T-cell (primary cell): ENCODE measurements at regions of chr19 and their contacts with region 1.

Region 1: DNA sequence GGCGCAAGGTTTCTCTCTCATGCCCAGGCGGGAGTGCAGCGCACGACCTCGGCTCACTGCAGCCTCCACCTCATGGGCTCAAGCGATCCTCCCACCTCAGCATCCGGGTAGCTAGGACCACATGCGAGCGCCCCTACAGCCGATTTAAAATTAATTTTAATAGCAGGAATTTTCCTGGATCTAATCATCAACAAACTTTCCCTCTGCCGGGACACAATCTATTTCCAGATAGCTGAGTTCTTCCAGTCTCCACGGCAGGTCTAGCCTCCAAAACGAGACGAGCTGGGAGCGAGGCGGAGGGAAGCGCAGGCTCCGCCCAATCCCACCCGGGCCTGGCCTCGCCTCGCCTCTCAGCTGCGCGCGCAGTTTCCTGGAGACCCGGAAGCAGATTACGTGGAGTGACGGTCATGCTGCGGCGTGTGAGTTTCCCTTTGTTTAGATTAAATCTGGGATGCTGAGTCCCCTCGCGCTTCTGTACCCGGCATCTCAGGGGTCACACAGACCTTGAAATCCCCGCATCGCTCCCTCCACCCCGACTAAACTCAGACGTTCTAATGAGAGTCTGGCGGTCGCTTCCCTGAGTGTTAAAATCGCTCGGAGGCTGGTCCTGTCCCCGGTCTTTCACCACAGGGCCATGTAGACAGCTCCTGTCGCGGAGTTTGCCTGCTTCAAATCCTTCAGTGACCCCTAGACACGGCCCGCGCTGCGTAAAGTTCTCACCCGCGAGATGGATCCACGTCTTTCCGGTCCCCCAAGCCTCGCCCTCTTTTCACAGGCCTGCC is at the start of gene ZNF880:
- DNase-seq: peak; percentile 75 to 94 (median 89)
- ATAC-seq: peak; percentile 97 to 100 (median 98)
- H3K4me3 ChIP-seq: peak within 1 kb of the TSS; percentile 83 to 96
- H3K4me3 Mint-ChIP-seq: peak within 1 kb of the TSS; percentile 91 to 93 (median 93)
- H3K27ac ChIP-seq: peak within 1 kb of the TSS; percentile 100
- H3K27ac Mint-ChIP-seq: peak within 1 kb of the TSS; percentile 94 to 95
- H3K4me1 ChIP-seq: peaks cover 2 to 17% of the 10 kb centered on the region in 2 experiments
- H3K4me1 Mint-ChIP-seq: peaks cover 13 to 17% (median 14%) of the 10 kb centered on the region in 3 donors
- H3K27me3 ChIP-seq: no peaks in the 10 kb centered on the region
- H3K27me3 Mint-ChIP-seq: no peaks in the 10 kb centered on the region
- total RNA-seq, gene ZNF880: 15.3 to 31.1 (median 28.5) TPM

Region 2: GRCh38 chr19:52095172-52096014 is 274.4 kb before region 1 on chr19 and contains the start of gene ZNF841:
- CTCF ChIA-PET with region 1: no interaction called
- POLR2A ChIA-PET with region 1: interaction called in 1 of 2 experiments, 11 read pairs
- DNase-seq: peak; percentile 67 to 87 (median 78)
- ATAC-seq: peak; percentile 94 to 98 (median 96)
- H3K4me3 ChIP-seq: peak within 1 kb of the TSS; percentile 94 to 98
- H3K4me3 Mint-ChIP-seq: peak within 1 kb of the TSS; percentile 94 to 100 (median 97)
- H3K27ac ChIP-seq: peak within 1 kb of the TSS; percentile 78
- H3K27ac Mint-ChIP-seq: peak within 1 kb of the TSS; percentile 92 to 94
- H3K4me1 ChIP-seq: peaks cover 2 to 20% of the 10 kb centered on the region in 2 experiments
- H3K4me1 Mint-ChIP-seq: peaks cover 24 to 47% (median 40%) of the 10 kb centered on the region in 3 donors
- H3K27me3 ChIP-seq: no peaks in the 10 kb centered on the region
- H3K27me3 Mint-ChIP-seq: peaks cover 0 to 3% of the 10 kb centered on the region in 2 donors
- total RNA-seq, gene ZNF841: 25.4 to 34.3 (median 32.2) TPM

Region 3: DNA sequence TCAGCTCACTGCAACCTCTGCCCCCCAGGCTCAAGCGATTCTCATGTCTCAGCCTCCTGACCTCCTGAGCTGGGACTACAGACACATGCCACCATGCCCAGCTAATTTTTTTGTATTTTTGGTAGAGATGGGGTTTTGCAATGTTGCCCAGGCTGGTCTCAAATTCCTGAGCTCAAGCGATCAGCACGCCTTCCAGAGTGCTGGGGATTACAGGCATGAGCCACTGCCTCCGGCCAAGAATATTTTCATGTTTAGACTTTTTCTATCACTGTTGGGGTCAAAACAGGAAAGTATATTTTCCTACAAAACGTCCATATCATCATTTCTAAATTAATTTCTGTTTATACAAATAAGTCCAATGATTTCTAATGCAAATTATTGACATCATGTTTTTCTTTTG is 109.8 kb before region 1 on chr19:
- CTCF ChIA-PET with region 1: no interaction called
- POLR2A ChIA-PET with region 1: interaction called in 1 of 2 experiments, 14 read pairs
- DNase-seq: no peak
- ATAC-seq: no peak
- H3K4me3 ChIP-seq: no peak overlapping the region
- H3K4me3 Mint-ChIP-seq: no peak overlapping the region
- H3K27ac ChIP-seq: no peak overlapping the region
- H3K27ac Mint-ChIP-seq: no peak overlapping the region
- H3K4me1 ChIP-seq: no peaks in the 10 kb centered on the region
- H3K4me1 Mint-ChIP-seq: no peaks in the 10 kb centered on the region
- H3K27me3 ChIP-seq: peaks cover 0 to 2% of the 10 kb centered on the region in 2 experiments
- H3K27me3 Mint-ChIP-seq: peaks cover 7 to 10% of the 10 kb centered on the region in 2 donors

Region 4: GRCh38 chr19:52391135-52391534 is 21.4 kb after region 1 on chr19:
- CTCF ChIA-PET with region 1: no interaction called
- POLR2A ChIA-PET with region 1: no interaction called
- DNase-seq: no peak
- ATAC-seq: no peak
- H3K4me3 ChIP-seq: no peak overlapping the region
- H3K4me3 Mint-ChIP-seq: no peak overlapping the region
- H3K27ac ChIP-seq: no peak overlapping the region
- H3K27ac Mint-ChIP-seq: no peak overlapping the region
- H3K4me1 ChIP-seq: no peaks in the 10 kb centered on the region
- H3K4me1 Mint-ChIP-seq: no peaks in the 10 kb centered on the region
- H3K27me3 ChIP-seq: no peaks in the 10 kb centered on the region
- H3K27me3 Mint-ChIP-seq: no peaks in the 10 kb centered on the region

Region 5: DNA sequence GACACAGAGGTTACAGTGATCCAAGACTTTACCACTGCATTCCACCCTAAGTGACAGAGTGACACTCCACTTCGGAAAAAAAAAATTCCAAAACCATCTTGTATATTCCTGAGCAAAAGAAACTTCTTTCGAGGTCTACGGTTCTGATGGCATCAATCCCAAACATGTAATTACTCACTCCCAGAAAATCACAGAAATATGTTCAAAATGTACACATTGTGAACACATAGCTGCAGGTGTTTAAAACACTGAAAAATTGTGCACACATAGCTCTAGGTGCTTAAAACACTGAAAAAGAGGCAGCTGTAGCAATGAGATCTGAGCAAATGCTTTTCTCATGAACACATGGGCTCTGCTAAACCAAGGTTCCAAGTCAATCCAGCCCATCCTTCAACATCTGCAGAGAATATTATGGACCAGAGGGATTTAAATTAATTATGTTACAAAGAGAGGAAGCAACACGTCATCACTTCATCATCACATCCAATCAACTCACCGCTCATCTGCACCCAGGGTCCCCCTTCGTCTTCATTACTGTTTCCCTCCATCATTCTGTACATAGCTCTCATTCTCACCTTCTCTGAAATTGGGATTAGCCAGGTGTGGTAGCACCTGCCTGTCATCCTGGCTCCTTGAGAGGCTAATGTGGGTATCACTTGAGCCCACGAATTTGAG is 501.8 kb after region 1 on chr19:
- CTCF ChIA-PET with region 1: no interaction called
- POLR2A ChIA-PET with region 1: no interaction called
- DNase-seq: no peak
- ATAC-seq: no peak
- H3K4me3 ChIP-seq: no peak overlapping the region
- H3K4me3 Mint-ChIP-seq: no peak overlapping the region
- H3K27ac ChIP-seq: no peak overlapping the region
- H3K27ac Mint-ChIP-seq: no peak overlapping the region
- H3K4me1 ChIP-seq: no peaks in the 10 kb centered on the region
- H3K4me1 Mint-ChIP-seq: no peaks in the 10 kb centered on the region
- H3K27me3 ChIP-seq: no peaks in the 10 kb centered on the region
- H3K27me3 Mint-ChIP-seq: no peaks in the 10 kb centered on the region

Region 6: DNA sequence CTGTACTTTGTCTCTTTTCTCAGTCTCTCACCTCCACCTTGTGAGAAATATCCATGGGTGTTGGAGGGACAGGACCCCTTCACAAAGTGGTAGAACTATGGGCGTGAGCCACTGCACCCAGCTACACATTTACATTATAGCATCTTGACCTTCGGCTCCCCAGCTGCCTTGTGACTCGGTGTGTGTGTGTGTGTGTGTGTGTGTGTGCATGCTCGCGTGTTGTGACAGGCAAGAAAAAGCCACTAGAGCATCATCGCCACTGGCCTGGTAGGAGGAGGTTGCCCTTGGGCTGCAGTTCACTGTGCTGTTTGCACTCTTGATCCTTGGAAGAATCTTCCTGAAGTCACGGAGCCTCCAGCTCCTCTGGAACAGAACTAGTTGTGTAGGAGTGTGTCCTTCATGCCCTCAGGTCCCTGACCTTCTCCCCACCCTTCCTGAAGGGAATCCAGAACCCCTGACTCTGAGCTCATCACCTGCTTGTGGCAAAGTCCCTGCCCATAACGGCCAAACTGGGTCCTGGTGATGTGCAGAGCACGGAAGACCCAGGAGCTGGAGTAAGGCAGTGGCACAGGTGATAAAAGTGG is 567.3 kb after region 1 on chr19:
- CTCF ChIA-PET with region 1: no interaction called
- POLR2A ChIA-PET with region 1: interaction called in 1 of 2 experiments, 13 read pairs
- DNase-seq: no peak
- ATAC-seq: no peak
- H3K4me3 ChIP-seq: no peak overlapping the region
- H3K4me3 Mint-ChIP-seq: no peak overlapping the region
- H3K27ac ChIP-seq: no peak overlapping the region
- H3K27ac Mint-ChIP-seq: no peak overlapping the region
- H3K4me1 ChIP-seq: peaks cover 4 to 10% of the 10 kb centered on the region in 2 experiments
- H3K4me1 Mint-ChIP-seq: peaks cover 22 to 31% (median 27%) of the 10 kb centered on the region in 3 donors
- H3K27me3 ChIP-seq: no peaks in the 10 kb centered on the region
- H3K27me3 Mint-ChIP-seq: no peaks in the 10 kb centered on the region